Activated B cell treated with CpG ODN at 0.5 μM for 24 hours (primary cell): ENCODE measurements at regions of chr5 and their contacts with region 1.

Region 1: DNA sequence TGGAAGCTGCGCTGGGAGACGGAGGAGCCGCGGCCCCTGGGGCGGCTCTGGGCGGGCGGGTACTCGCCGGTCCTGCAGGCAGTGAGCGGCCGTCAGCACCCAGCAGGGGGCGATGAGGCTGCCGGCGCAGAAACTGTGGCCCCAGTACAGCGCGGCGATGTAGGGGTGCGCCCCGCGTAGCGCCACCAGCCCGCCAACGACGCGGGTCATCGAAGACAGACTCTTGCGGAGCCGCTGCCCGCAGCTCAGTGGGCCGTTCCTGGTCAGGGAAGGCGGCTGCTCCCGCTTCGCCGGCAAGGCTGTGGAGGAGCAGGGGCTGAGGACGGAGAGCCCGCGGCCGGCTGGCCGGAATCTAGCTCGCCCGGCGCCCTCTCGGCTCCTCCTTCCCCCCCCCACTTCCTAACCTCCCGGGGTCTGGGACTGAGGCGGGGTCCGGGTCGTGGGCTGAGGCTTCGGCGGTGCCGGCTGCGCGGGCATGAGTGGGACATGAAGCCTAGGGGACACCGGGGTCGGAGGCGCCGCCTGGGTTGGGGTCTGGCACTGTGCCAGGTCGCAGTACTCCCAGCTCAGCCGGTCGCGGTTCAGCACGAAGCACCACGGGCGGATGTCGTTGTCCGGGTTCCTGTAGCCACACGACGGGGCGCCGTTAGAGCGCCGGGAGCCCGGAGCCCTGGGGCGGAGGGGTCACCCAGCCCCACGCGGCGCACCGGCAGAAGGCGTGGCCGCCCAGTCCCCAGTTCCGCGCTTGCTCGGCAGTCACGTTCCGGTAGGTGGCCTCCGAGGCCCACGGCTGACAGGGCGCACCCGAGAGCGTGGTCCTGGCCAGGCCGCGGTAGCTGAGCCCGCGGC is 3.6 kb upstream of the PFN3 start:
- DNase-seq: peak; percentile 77
- ATAC-seq: peak; percentile 82
- H3K4me3 Mint-ChIP-seq: peak overlapping the region; percentile 79
- H3K27ac Mint-ChIP-seq: no peak overlapping the region
- H3K4me1 Mint-ChIP-seq: peaks cover 39% of the 10 kb centered on the region
- H3K27me3 Mint-ChIP-seq: peaks cover 5% of the 10 kb centered on the region
- CTCF ChIP-seq: peak; percentile 7

Region 2: DNA sequence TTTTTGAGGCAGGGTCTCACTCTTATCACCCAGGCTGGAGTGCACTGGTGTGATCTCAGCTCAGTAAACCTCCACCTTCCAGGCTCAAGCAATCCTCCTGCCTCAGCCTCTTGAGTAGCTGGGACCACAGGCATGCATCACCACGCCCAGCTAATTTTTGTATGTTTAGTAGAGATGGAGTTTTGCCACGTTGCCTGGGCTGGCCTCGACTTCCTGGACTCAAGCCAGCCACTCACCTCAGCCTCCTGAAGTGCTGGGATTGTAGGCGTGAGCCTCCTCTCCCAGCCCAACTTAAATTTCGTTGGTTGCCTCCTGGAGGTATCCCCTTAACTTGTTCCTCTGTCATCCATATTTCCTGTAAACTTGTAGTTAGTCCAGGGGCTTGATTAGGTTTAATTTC is 147.7 kb before region 1 on chr5:
- CTCF ChIA-PET with region 1: no interaction called
- POLR2A ChIA-PET with region 1: no interaction called
- intact Hi-C with region 1: no loop called
- DNase-seq: no peak
- ATAC-seq: no peak
- H3K4me3 Mint-ChIP-seq: no peak overlapping the region
- H3K27ac Mint-ChIP-seq: no peak overlapping the region
- H3K4me1 Mint-ChIP-seq: no peaks in the 10 kb centered on the region
- H3K27me3 Mint-ChIP-seq: no peaks in the 10 kb centered on the region
- CTCF ChIP-seq: no peak

Region 3: DNA sequence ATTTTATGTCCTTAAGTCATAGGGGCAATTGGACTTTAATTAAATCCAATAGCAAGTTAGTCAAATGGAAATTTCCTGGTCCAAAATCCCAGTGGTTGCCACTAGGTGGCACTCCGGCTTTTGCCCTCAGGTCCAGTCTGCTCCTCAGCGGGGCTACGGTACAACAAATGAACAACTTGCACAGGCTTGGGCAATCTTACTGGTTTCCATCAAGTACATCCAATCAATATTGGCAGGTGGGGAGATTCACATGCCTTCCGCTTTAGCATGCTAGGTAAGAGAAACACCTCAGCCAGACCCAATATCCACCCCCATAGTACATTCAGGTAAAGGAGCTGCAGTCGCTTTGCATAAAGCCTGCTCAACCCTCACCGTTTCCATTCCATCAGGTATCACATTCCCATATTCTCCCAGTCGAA is 86.0 kb before region 1 on chr5:
- CTCF ChIA-PET with region 1: interaction called, 4 read pairs
- POLR2A ChIA-PET with region 1: no interaction called
- intact Hi-C with region 1: loop called (anchors 1 kb)
- DNase-seq: peak; percentile 48
- ATAC-seq: peak; percentile 87
- H3K4me3 Mint-ChIP-seq: no peak overlapping the region
- H3K27ac Mint-ChIP-seq: no peak overlapping the region
- H3K4me1 Mint-ChIP-seq: peaks cover 15% of the 10 kb centered on the region
- H3K27me3 Mint-ChIP-seq: no peaks in the 10 kb centered on the region
- CTCF ChIP-seq: no peak

Region 4: DNA sequence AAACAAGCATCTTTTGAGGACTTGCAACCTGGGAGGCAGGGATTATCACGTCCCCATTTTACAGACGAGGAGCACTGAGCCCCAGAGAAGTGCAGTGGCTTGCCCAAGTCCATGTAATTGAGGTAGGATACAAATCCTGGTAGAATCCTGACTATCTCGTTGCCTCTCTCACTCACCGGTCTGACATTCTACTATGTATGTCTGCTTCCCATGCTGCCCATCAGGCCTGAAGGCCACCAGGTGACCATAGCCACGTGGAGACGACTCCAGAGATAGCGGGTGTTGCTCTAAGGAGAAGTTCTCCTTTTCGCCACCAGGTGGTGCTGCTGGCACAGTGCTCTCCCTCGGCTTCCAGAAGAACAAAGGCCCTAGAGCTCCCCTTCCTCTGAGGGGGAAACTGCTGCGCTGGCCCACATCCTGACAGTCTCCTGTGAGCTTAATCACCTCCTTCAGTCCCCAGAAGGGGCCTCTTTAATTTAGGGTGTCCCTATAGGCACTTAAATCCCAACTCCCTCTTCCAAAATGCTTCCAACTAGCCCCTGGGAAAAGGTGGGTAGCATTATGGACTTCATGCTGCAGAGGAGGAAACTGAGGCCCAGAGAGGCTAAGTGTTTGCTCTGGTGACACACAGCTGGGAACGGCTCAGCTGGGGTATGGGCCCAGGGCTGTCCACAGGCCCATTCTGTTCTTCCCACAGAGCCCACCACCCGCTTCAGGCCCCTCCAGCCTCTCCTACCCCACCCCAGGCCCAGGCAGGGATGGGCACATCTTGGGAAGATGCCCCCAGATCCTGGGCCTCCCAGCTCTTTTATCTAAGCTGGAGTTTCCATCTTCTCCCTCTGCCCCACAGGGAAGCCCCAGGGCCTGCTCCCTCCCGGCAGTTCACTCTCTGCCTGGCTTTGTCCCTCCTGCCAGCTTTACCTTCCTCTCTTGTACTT is 13.4 kb before region 1 on chr5:
- CTCF ChIA-PET with region 1: interaction called, 85 read pairs
- POLR2A ChIA-PET with region 1: interaction called, 7 read pairs
- intact Hi-C with region 1: loop called (anchors 1 kb)
- DNase-seq: peak; percentile 71
- ATAC-seq: peak; percentile 93
- H3K4me3 Mint-ChIP-seq: no peak overlapping the region
- H3K27ac Mint-ChIP-seq: no peak overlapping the region
- H3K4me1 Mint-ChIP-seq: peaks cover 29% of the 10 kb centered on the region
- H3K27me3 Mint-ChIP-seq: peaks cover 1% of the 10 kb centered on the region
- CTCF ChIP-seq: peak; percentile 29

Region 5: GRCh38 chr5:177431317-177432142 is 27.5 kb after region 1 on chr5:
- CTCF ChIA-PET with region 1: interaction called, 53 read pairs
- POLR2A ChIA-PET with region 1: interaction called, 43 read pairs
- intact Hi-C with region 1: loop called (anchors 1 kb)
- DNase-seq: peak; percentile 73
- ATAC-seq: peak; percentile 53
- H3K4me3 Mint-ChIP-seq: peak overlapping the region; percentile 88
- H3K27ac Mint-ChIP-seq: peak overlapping the region; percentile 89
- H3K4me1 Mint-ChIP-seq: peaks cover 70% of the 10 kb centered on the region
- H3K27me3 Mint-ChIP-seq: no peaks in the 10 kb centered on the region
- CTCF ChIP-seq: no peak

Region 6: GRCh38 chr5:177446200-177447065 is 42.4 kb after region 1 on chr5 and contains the start of gene PRR7:
- CTCF ChIA-PET with region 1: interaction called, 293 read pairs
- POLR2A ChIA-PET with region 1: interaction called, 66 read pairs
- intact Hi-C with region 1: loop called (anchors 2 kb)
- DNase-seq: peak; percentile 77
- ATAC-seq: peak; percentile 64
- H3K4me3 Mint-ChIP-seq: peak within 1 kb of the TSS; percentile 75
- H3K27ac Mint-ChIP-seq: peak within 1 kb of the TSS; percentile 86
- H3K4me1 Mint-ChIP-seq: peaks cover 41% of the 10 kb centered on the region
- H3K27me3 Mint-ChIP-seq: no peaks in the 10 kb centered on the region
- CTCF ChIP-seq: no peak
- total RNA-seq, gene PRR7: 2.4 and 3.2 TPM in 2 replicates

Region 7: DNA sequence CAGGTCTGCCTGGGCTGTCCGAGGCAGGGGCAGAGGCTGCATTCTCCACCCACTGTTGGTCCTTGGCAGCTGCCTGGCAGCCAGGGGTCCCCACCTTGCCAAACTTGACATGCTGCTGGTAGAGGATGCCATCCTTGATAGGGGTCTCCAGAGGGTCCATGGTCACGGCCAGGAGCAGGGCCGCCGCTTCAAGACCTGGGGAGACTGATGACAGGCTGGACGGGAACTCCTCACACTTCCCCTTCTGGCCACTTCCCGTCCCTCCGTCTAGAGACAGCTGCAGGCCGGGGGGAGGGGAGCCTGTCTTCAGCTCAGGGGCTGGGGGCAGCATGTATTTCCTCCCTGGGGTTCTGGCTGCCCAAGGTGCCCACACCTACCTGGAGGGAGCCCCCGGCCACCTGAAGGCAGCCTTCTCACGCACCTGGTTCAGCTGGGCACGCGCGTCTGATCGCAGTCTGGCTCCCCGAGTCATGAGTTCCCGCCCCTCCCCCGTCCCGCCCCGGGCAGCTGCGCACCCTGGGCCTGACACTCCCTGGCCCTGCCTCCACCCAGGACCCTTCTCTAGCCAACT is 105.5 kb after region 1 on chr5 and contains the start of gene DOK3:
- CTCF ChIA-PET with region 1: interaction called, 11 read pairs
- POLR2A ChIA-PET with region 1: interaction called, 4 read pairs
- intact Hi-C with region 1: no loop called
- DNase-seq: peak; percentile 52
- ATAC-seq: peak; percentile 33
- H3K4me3 Mint-ChIP-seq: peak within 1 kb of the TSS; percentile 93
- H3K27ac Mint-ChIP-seq: peak within 1 kb of the TSS; percentile 96
- H3K4me1 Mint-ChIP-seq: peaks cover 60% of the 10 kb centered on the region
- H3K27me3 Mint-ChIP-seq: no peaks in the 10 kb centered on the region
- CTCF ChIP-seq: no peak
- total RNA-seq, gene DOK3: 82.5 and 88.5 TPM in 2 replicates